Naive thymus-derived CD4-positive, alpha-beta T cell (primary cell): ENCODE measurements at regions of chr10 and their contacts with region 1.

Region 1: DNA sequence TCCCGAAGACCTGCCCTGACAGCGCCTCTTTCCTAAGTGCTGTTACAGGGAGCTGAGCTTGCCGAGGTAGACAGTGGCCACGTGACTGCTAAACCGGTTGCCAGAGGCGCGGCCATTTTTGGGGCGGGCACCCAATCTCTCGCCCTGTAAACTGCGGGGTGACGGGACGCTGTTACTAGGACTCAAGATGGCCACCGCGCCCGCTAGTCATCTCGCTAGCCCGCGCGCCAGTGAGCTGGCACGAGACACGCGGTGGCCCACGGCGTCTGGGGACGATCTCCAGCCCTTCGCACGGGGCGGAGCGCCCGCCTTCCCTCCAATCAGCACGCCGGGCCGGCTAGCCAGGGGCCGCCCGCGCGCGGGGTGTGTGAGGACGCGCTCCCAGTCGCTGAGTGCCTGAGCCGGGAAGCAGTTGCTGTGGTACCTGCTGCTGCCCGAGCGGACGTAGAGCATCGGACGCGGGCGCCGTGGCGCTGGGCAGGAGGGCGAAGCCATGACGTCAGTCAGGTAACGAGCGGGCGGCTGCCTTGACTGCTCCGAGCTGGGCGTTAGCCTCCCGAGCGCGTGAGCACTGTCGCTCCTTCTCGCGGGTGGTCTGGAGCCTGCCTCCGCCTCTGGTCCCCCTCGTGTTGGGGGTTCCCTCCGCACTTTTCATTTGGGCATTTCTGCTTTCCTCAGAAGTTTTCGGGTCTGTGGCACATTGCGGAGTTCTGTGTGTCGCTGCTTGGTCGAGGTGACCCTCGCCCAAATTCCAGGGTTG is 25.5 kb downstream of the ADK start:
- DNase-seq: peak; percentile 90 to 96 (median 95)
- ATAC-seq: peak; percentile 98
- H3K4me3 ChIP-seq: peak overlapping the region; percentile 84
- H3K4me3 Mint-ChIP-seq: peak overlapping the region; percentile 87 to 98 (median 93)
- H3K27ac ChIP-seq: peak overlapping the region; percentile 86
- H3K27ac Mint-ChIP-seq: peak overlapping the region; percentile 94 to 98 (median 97)
- H3K4me1 ChIP-seq: peaks cover 6 to 7% of the 10 kb centered on the region in 2 donors
- H3K4me1 Mint-ChIP-seq: peaks cover 14 to 46% (median 40%) of the 10 kb centered on the region in 7 donors
- H3K27me3 ChIP-seq: no peaks in the 10 kb centered on the region
- H3K27me3 Mint-ChIP-seq: no peaks in the 10 kb centered on the region

Region 2: GRCh38 chr10:73246783-73247508 is 929.6 kb before region 1 on chr10 and contains the start of gene DNAJC9:
- CTCF ChIA-PET with region 1: no interaction called
- POLR2A ChIA-PET with region 1: interaction called, 3 read pairs
- intact Hi-C with region 1: loop called (anchors 2 to 10 kb)
- DNase-seq: peak; percentile 93 to 98 (median 96)
- ATAC-seq: peak; percentile 95
- H3K4me3 ChIP-seq: peak within 1 kb of the TSS; percentile 71
- H3K4me3 Mint-ChIP-seq: peak within 1 kb of the TSS; percentile 92 to 100 (median 97)
- H3K27ac ChIP-seq: peak within 1 kb of the TSS; percentile 86
- H3K27ac Mint-ChIP-seq: peak within 1 kb of the TSS; percentile 91 to 98 (median 96)
- H3K4me1 ChIP-seq: peaks cover 27 to 37% of the 10 kb centered on the region in 2 donors
- H3K4me1 Mint-ChIP-seq: peaks cover 30 to 69% (median 55%) of the 10 kb centered on the region in 7 donors
- H3K27me3 ChIP-seq: no peaks in the 10 kb centered on the region
- H3K27me3 Mint-ChIP-seq: no peaks in the 10 kb centered on the region
- total RNA-seq, gene DNAJC9: 14.5 to 47.7 (median 26.8) TPM

Region 3: DNA sequence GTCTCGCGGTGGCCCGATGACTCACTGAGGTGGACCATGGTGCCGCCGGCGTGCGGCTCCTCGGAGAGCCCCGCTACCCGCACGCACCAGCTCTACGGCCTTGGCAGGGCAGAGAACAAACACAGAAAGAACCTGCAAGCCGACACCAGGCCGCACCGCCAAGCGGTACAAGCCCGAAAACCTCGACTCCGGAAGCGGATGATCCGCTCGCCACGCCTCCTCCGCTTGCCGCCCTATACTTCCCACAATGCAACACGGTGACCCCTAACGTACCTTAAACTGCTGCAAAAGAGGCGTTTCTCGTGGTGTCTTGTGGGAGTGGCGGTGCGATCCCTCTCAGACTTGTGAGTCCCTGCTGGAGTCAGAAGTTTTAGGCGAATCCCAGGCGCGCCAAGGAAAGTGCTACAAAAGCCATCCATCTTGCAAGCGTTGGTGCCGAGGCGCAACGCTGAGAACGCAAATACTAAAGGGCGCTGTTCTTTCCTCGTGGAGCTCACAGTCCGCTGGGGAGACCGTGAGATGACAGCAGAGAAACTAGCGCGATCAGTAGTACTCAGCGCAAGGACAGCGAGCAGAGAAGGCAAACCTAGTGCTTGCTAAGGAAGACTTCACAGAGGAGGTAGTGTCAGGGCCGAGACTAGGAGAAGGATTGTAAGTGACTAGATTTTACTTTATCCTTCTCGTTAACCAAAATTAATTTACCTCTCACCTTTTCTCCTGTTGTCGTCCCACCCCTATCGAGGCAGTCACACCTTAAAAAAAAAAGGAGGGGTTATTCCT is 923.9 kb before region 1 on chr10 and contains the start of gene MRPS16:
- CTCF ChIA-PET with region 1: no interaction called
- POLR2A ChIA-PET with region 1: interaction called, 3 read pairs
- intact Hi-C with region 1: loop called (anchors 2 to 10 kb)
- DNase-seq: peak; percentile 75 to 95 (median 93)
- ATAC-seq: peak; percentile 98
- H3K4me3 ChIP-seq: peak within 1 kb of the TSS; percentile 94
- H3K4me3 Mint-ChIP-seq: peak within 1 kb of the TSS; percentile 95 to 100 (median 99)
- H3K27ac ChIP-seq: peak within 1 kb of the TSS; percentile 92
- H3K27ac Mint-ChIP-seq: peak within 1 kb of the TSS; percentile 91 to 97 (median 94)
- H3K4me1 ChIP-seq: peaks cover 18 to 26% of the 10 kb centered on the region in 2 donors
- H3K4me1 Mint-ChIP-seq: peaks cover 19 to 50% (median 37%) of the 10 kb centered on the region in 7 donors
- H3K27me3 ChIP-seq: no peaks in the 10 kb centered on the region
- H3K27me3 Mint-ChIP-seq: peaks cover 0 to 2% (median 0%) of the 10 kb centered on the region in 5 donors
- total RNA-seq, gene MRPS16: 29.6 to 99.9 (median 47.6) TPM

Region 4: DNA sequence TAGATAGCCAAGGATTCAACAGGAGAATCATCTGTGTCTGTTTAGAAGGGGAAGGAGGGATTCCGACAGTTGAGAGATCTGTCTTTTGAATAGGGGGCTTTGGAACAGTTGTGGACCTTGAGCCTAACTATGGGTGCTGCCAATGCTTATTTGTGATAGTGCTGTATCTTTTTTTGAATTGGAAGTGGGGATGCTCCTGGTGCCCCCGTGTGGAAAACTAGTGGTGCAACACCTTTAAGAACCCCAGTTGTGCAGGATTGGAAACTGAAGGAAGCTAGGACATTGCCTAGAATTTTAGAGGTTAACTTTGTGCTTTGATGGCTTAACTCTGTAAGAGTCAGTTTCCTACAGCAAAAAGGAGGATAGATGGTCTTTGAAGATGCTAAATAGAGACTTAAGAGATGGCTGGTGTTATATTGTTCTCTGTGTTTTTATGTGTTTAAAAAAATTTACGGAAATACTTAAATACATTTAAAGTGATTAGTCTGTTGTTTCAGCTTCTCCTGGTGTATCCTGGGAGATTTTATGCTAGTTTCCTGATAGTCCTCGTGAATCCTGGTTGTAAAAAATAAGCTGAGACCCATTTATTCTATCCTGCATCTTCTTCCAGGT is 95.3 kb before region 1 on chr10:
- CTCF ChIA-PET with region 1: no interaction called
- POLR2A ChIA-PET with region 1: no interaction called
- intact Hi-C with region 1: no loop called
- DNase-seq: peak in 7 of 9 donors; percentile 14 to 51 (median 41)
- ATAC-seq: peak; percentile 71
- H3K4me3 ChIP-seq: no peak overlapping the region
- H3K4me3 Mint-ChIP-seq: no peak overlapping the region
- H3K27ac ChIP-seq: no peak overlapping the region
- H3K27ac Mint-ChIP-seq: no peak overlapping the region
- H3K4me1 ChIP-seq: peaks cover 0 to 15% of the 10 kb centered on the region in 2 donors
- H3K4me1 Mint-ChIP-seq: peaks cover 0 to 40% (median 6%) of the 10 kb centered on the region in 7 donors
- H3K27me3 ChIP-seq: no peaks in the 10 kb centered on the region
- H3K27me3 Mint-ChIP-seq: no peaks in the 10 kb centered on the region

Region 5: DNA sequence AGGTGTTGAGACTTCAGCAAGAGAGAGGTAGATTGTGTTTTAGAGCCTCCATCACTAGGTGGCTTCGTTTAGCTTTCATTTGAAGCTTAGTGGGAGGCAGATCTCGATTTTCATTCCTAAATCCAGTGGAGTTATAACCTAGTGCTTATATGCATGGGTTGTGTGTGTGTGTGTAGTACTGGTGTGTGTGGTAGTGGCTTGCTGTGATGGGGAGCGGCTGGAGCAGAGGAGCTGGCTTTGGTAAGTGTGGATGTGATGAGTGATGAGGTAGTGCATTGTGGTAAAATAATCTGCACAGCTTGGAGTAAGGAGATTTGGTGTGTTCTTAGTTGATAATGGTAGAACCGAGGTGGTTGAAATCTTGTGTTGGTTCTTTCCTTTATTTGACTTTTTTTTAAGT is 69.2 kb before region 1 on chr10:
- CTCF ChIA-PET with region 1: no interaction called
- POLR2A ChIA-PET with region 1: no interaction called
- intact Hi-C with region 1: no loop called
- DNase-seq: no peak
- ATAC-seq: no peak
- H3K4me3 ChIP-seq: no peak overlapping the region
- H3K4me3 Mint-ChIP-seq: no peak overlapping the region
- H3K27ac ChIP-seq: no peak overlapping the region
- H3K27ac Mint-ChIP-seq: peak overlapping the region in 2 of 9 donors; percentile 20 to 75
- H3K4me1 ChIP-seq: no peaks in the 10 kb centered on the region
- H3K4me1 Mint-ChIP-seq: peaks cover 0 to 7% (median 0%) of the 10 kb centered on the region in 7 donors
- H3K27me3 ChIP-seq: no peaks in the 10 kb centered on the region
- H3K27me3 Mint-ChIP-seq: no peaks in the 10 kb centered on the region

Region 6: DNA sequence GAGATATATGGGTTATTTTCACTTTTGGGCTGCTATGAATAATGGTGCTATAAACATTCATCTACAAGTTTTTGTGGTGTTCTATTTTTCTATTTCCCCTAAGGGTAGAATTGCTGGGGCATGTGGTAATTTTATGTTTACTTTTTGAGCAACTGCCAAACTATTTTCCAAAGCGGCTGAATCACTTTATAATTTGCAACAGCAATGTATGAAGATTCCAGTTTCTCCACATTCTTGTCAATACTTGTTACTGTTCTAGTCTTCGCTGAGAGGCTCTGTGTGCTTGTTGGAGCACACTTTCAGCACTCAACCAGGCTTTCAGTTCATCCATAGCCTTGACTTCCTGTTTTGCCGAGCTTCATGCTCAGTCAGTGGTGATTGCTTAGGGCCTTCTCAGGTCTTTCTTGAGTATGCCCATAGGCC is 13.4 kb after region 1 on chr10:
- CTCF ChIA-PET with region 1: interaction called, 6 read pairs
- POLR2A ChIA-PET with region 1: interaction called, 52 read pairs
- intact Hi-C with region 1: loop called (anchors 1 kb)
- DNase-seq: peak in 6 of 9 donors; percentile 34 to 51 (median 42)
- ATAC-seq: peak; percentile 75
- H3K4me3 ChIP-seq: peak overlapping the region; percentile 15
- H3K4me3 Mint-ChIP-seq: peak overlapping the region; percentile 60 to 83 (median 70)
- H3K27ac ChIP-seq: peak overlapping the region; percentile 62
- H3K27ac Mint-ChIP-seq: peak overlapping the region; percentile 86 to 97 (median 95)
- H3K4me1 ChIP-seq: peaks cover 21 to 27% of the 10 kb centered on the region in 2 donors
- H3K4me1 Mint-ChIP-seq: peaks cover 28 to 76% (median 66%) of the 10 kb centered on the region in 7 donors
- H3K27me3 ChIP-seq: no peaks in the 10 kb centered on the region
- H3K27me3 Mint-ChIP-seq: no peaks in the 10 kb centered on the region

Region 7: GRCh38 chr10:74213571-74214162 is 37.1 kb after region 1 on chr10:
- CTCF ChIA-PET with region 1: no interaction called
- POLR2A ChIA-PET with region 1: interaction called, 10 read pairs
- intact Hi-C with region 1: loop called (anchors 1 to 2 kb)
- DNase-seq: peak in 7 of 9 donors; percentile 26 to 60 (median 42)
- ATAC-seq: peak; percentile 78
- H3K4me3 ChIP-seq: no peak overlapping the region
- H3K4me3 Mint-ChIP-seq: no peak overlapping the region
- H3K27ac ChIP-seq: no peak overlapping the region
- H3K27ac Mint-ChIP-seq: peak overlapping the region in 1 of 9 donors; percentile 0
- H3K4me1 ChIP-seq: no peaks in the 10 kb centered on the region
- H3K4me1 Mint-ChIP-seq: peaks cover 7 to 16% (median 12%) of the 10 kb centered on the region in 7 donors
- H3K27me3 ChIP-seq: no peaks in the 10 kb centered on the region
- H3K27me3 Mint-ChIP-seq: no peaks in the 10 kb centered on the region

Region 8: DNA sequence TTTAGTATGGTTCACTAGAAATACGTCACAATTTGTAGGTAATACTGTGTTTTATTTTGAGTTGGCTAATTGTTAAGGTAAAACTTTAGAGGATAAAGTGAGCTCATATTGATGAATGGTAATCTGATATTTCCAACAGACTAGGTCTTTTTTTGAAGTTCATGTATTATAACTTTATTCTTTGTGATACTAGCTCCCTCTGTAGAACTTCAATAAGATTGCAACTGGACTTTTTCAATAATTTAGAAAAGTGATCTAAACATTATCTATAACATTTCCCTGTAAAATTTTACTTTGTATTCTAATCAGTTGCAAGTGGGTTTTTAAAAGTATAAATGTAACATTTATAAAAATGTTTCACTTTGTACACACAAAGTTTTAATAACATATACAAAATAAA is 58.0 kb after region 1 on chr10:
- CTCF ChIA-PET with region 1: no interaction called
- POLR2A ChIA-PET with region 1: no interaction called
- intact Hi-C with region 1: loop called in 1 of 2 experiments (anchors 2 kb)
- DNase-seq: peak in 4 of 9 donors; percentile 12 to 29 (median 20)
- ATAC-seq: no peak
- H3K4me3 ChIP-seq: no peak overlapping the region
- H3K4me3 Mint-ChIP-seq: no peak overlapping the region
- H3K27ac ChIP-seq: no peak overlapping the region
- H3K27ac Mint-ChIP-seq: peak overlapping the region in 1 of 9 donors; percentile 26
- H3K4me1 ChIP-seq: no peaks in the 10 kb centered on the region
- H3K4me1 Mint-ChIP-seq: peaks cover 0 to 11% (median 0%) of the 10 kb centered on the region in 7 donors
- H3K27me3 ChIP-seq: no peaks in the 10 kb centered on the region
- H3K27me3 Mint-ChIP-seq: no peaks in the 10 kb centered on the region

Region 9: DNA sequence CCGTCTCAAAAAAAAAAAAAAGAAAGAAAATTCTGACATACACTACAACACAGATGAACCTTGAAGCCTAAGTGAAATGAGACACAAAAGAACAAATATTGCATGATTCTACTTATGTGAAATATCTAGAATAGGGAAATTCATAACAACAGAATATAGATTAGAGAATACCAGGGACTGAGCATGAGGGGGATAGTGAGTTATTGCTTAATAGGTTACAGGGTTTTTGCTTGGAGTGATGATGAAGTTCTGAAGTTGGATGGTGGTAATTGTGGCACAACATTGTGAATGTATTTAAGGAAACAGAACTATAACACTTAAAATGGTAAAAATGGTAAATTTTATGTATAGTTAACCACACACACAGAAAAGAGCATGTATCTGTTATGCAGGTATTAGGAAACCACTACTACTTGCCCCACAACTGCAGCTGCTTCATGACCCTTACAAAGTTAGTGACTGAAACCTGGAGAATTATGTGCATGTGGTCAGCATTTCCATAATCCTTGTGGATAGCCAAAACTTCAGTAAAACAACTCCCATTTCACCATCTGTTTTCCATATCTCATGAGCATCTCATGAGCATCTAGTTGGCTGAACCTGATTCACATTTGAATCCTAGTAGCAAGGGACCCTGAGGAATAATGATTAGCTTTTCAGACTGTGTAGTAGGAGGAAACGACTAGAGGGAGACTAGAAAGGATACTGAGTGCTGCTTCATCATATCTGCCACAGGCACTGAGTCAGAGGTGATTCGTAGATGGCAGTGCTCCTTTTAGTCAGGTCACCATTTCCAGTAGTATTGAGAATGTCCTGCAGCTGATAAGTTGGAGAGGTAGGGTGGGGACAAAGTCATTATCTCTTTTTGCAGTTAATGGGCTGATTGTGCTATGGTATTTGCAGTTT is 961.2 kb after region 1 on chr10:
- CTCF ChIA-PET with region 1: no interaction called
- POLR2A ChIA-PET with region 1: no interaction called
- intact Hi-C with region 1: no loop called
- DNase-seq: no peak
- ATAC-seq: no peak
- H3K4me3 ChIP-seq: no peak overlapping the region
- H3K4me3 Mint-ChIP-seq: peak overlapping the region in 1 of 10 donors; percentile 42
- H3K27ac ChIP-seq: no peak overlapping the region
- H3K27ac Mint-ChIP-seq: peak overlapping the region in 7 of 9 donors; percentile 1 to 76 (median 18)
- H3K4me1 ChIP-seq: no peaks in the 10 kb centered on the region
- H3K4me1 Mint-ChIP-seq: peaks cover 25 to 63% (median 45%) of the 10 kb centered on the region in 7 donors
- H3K27me3 ChIP-seq: no peaks in the 10 kb centered on the region
- H3K27me3 Mint-ChIP-seq: no peaks in the 10 kb centered on the region

Region 10: DNA sequence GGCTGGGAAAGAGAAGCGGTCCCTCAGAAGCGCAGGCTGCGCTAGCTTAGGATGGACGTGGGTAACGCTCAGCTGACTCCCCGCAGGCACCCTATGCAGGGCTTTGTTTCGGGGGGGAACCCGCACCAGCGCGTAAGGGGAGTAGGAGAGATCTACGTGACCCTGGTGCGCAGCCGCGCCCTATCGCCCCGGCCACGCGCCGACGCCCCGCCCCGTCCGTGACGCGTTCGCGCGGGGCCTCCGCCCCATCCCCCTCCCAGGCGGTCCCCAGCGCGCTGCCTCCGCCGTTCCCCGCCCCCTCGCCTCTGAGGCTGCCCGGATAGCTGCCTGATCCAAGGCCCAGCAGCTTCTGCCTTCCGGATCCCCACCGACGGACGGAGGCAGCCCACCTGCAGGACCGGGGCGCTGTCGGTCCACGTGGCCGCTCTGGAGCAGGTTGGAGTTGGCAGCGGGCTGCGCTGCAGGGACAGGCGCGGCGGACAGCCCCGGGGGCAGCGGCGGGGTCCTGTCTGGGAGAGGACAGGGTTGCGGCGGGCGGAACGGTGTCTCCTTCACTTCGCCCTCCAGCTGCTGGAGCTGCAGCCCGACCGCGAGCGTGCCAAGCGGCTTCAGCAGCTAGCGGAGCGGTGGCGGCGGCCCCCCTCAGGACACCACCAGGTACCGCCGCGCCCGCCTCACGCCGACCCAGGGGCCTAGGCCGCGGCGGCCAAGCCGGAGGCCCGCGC is 1033.9 kb after region 1 on chr10 and contains the start of gene VDAC2:
- CTCF ChIA-PET with region 1: no interaction called
- POLR2A ChIA-PET with region 1: no interaction called
- intact Hi-C with region 1: loop called (anchors 2 kb)
- DNase-seq: peak; percentile 92 to 100 (median 98)
- ATAC-seq: peak; percentile 92
- H3K4me3 ChIP-seq: peak within 1 kb of the TSS; percentile 81
- H3K4me3 Mint-ChIP-seq: peak within 1 kb of the TSS; percentile 87 to 100 (median 98)
- H3K27ac ChIP-seq: peak within 1 kb of the TSS; percentile 96
- H3K27ac Mint-ChIP-seq: peak within 1 kb of the TSS; percentile 99 to 100 (median 100)
- H3K4me1 ChIP-seq: peaks cover 15 to 21% of the 10 kb centered on the region in 2 donors
- H3K4me1 Mint-ChIP-seq: peaks cover 21 to 44% (median 29%) of the 10 kb centered on the region in 7 donors
- H3K27me3 ChIP-seq: no peaks in the 10 kb centered on the region
- H3K27me3 Mint-ChIP-seq: no peaks in the 10 kb centered on the region
- total RNA-seq, gene VDAC2: 82.8 to 138 (median 121) TPM